BJ (cell line): ENCODE measurements at regions of chr1 and their contacts with region 1.

Region 1: GRCh38 chr1:228405987-228406265 is 709 bp downstream of the TRIM11 start:
- DNase-seq: no peak
- H3K4me3 ChIP-seq: peak overlapping the region; percentile 58
- H3K27me3 ChIP-seq: no peaks in the 10 kb centered on the region
- CTCF ChIP-seq: no peak

Region 2: GRCh38 chr1:228109073-228109961 is 296.6 kb before region 1 on chr1 and contains the start of gene MRPL55:
- CTCF ChIA-PET with region 1: no interaction called
- POLR2A ChIA-PET with region 1: interaction called, 21 read pairs
- DNase-seq: peak; percentile 77
- H3K4me3 ChIP-seq: peak within 1 kb of the TSS; percentile 99
- H3K27me3 ChIP-seq: no peaks in the 10 kb centered on the region
- CTCF ChIP-seq: 0 out of 2 replicates have a peak, but pooled peaks have one; percentile 10
- polyA plus RNA-seq, gene MRPL55: 50.8 and 80.8 TPM in 2 replicates

Region 3: GRCh38 chr1:228393248-228393699 is 12.7 kb before region 1 on chr1:
- CTCF ChIA-PET with region 1: interaction called, 21 read pairs
- POLR2A ChIA-PET with region 1: no interaction called
- DNase-seq: peak; percentile 26
- H3K4me3 ChIP-seq: no peak overlapping the region
- H3K27me3 ChIP-seq: no peaks in the 10 kb centered on the region
- CTCF ChIP-seq: peak; percentile 78

Region 4: DNA sequence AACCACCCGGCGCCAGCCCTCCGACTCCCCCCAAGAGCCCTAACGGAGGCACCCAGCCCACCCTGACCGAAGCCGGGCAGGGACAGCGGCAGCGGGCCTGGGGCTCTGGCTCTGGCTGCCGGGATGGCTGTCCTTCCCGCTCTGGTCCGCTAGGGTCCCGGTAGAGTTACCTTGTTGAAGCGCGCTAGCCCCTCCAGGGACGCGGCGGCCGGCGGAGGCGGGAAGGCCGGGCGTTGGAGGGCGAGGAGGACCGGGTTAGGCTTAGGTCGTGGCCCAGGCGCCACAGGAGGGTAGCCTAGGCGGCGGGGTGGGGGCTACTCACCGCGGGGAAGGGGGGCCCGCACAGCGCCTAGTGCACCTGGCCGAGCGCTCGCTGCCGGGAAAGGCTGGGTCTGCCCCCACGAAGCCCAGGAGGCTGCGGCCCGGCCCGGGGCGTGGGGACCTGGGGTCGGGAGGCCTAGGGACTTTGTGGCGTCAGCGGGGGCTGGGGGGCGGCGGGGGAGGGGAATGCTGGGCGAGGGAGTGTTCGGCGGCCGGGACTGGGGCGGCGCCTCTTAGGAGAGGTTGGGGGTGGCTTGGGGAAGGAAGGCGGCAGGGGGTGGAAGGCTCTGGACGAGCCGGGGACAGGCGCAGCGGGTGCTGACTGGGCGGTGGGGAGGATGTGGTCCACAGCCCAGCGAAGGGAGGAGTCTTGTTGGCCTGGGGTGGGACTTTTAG is 10.4 kb after region 1 on chr1 and contains the start of gene TRIM17:
- CTCF ChIA-PET with region 1: interaction called, 3 read pairs
- POLR2A ChIA-PET with region 1: interaction called, 12 read pairs
- DNase-seq: no peak
- H3K4me3 ChIP-seq: peak within 1 kb of the TSS; percentile 50
- H3K27me3 ChIP-seq: no peaks in the 10 kb centered on the region
- CTCF ChIP-seq: peak; percentile 51
- polyA plus RNA-seq, gene TRIM17: 0.33 and 0.55 TPM in 2 replicates